ENCODE measurements at regions of chr16 and their contacts with region 1.

Region 1: GRCh38 chr16:29198731-29199521 is 207.6 kb downstream of the NPIPB11 start:
- DNase-seq: no peak
- ATAC-seq: no peak
- H3K4me3 ChIP-seq: no peak overlapping the region
- H3K27ac ChIP-seq: no peak overlapping the region
- H3K4me1 ChIP-seq: peaks cover 37% of the 10 kb centered on the region
- H3K27me3 ChIP-seq: peaks cover 1 to 2% of the 10 kb centered on the region in 2 experiments; a peak in 3 of 5 replicates
- CTCF ChIP-seq: no peak
- EP300 ChIP-seq: no peak
- POLR2A ChIP-seq: no peak
- RAD21 ChIP-seq: no peak

Region 2: DNA sequence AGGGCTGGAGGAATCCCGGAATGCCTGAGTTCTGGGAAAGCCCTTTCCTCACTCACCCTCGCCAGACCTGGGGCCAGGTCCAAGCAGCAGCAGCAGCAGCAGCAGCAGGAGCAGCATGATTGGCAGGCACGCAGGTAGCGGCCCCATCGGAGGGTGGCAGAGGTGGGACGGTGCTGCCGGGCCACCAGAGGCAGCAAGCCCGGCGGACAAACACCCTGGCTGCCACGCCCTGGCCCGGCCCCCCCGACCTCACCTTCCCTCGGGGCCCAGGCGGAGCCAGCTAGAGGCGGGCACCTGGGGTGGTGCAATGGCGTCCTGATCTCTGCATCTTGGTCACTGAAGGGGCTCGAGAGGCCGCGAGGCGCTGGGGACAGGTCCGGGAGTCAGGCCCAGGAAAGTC is 91.6 kb before region 1 on chr16:
- CTCF ChIA-PET with region 1: no interaction called
- POLR2A ChIA-PET with region 1: no interaction called
- in situ Hi-C with region 1: loop called (anchors 25 kb)
- intact Hi-C with region 1: no loop called
- DNase-seq: no peak
- ATAC-seq: peak; percentile 55
- H3K4me3 ChIP-seq: no peak overlapping the region; a peak in 1 of 6 replicates
- H3K27ac ChIP-seq: no peak overlapping the region
- H3K4me1 ChIP-seq: no peaks in the 10 kb centered on the region
- H3K27me3 ChIP-seq: peaks cover 0 to 28% of the 10 kb centered on the region in 2 experiments; a peak in 3 of 5 replicates
- CTCF ChIP-seq: no peak
- EP300 ChIP-seq: no peak
- POLR2A ChIP-seq: no peak
- RAD21 ChIP-seq: no peak

Region 3: GRCh38 chr16:29256501-29256981 is 57.6 kb after region 1 on chr16:
- CTCF ChIA-PET with region 1: no interaction called
- POLR2A ChIA-PET with region 1: no interaction called
- in situ Hi-C with region 1: no loop called
- intact Hi-C with region 1: no loop called
- DNase-seq: no peak
- ATAC-seq: no peak
- H3K4me3 ChIP-seq: no peak overlapping the region
- H3K27ac ChIP-seq: no peak overlapping the region
- H3K4me1 ChIP-seq: peaks cover 61% of the 10 kb centered on the region
- H3K27me3 ChIP-seq: peaks cover 5 to 28% of the 10 kb centered on the region in 2 experiments
- CTCF ChIP-seq: no peak
- EP300 ChIP-seq: no peak
- POLR2A ChIP-seq: no peak
- RAD21 ChIP-seq: no peak